ENCODE measurements at regions of chr13 and their contacts with region 1.

Region 1: DNA sequence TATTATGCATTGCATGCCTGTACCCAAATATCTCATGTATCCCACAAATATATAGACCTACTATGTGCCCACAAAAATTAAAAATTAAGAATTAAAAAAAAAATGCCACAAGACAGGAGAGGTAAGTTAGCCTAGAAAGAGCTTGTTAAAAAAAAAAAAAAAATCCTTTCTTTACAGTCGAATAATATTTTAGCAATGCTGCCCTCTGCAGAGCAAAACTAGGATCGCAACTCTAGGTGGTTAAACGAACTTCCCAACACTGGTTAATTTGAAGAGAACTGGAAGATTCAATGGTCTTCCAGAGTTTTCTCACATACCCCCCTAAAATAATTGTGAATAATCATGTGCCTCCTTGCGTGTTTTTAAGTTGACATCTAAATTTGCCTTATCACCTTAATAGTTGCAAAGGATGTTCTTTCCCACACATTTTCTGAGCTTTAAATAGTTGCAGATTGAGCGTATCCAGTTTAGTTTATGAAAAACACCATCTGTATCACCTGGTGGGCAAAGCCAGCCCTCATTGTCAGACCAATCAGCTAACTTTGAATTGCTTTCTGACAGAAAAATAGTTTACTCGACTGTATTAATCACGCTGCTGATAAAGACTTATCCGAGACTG is 47.4 kb upstream of the RCBTB2 start:
- DNase-seq: no peak
- ATAC-seq: peak; percentile 38

Region 2: DNA sequence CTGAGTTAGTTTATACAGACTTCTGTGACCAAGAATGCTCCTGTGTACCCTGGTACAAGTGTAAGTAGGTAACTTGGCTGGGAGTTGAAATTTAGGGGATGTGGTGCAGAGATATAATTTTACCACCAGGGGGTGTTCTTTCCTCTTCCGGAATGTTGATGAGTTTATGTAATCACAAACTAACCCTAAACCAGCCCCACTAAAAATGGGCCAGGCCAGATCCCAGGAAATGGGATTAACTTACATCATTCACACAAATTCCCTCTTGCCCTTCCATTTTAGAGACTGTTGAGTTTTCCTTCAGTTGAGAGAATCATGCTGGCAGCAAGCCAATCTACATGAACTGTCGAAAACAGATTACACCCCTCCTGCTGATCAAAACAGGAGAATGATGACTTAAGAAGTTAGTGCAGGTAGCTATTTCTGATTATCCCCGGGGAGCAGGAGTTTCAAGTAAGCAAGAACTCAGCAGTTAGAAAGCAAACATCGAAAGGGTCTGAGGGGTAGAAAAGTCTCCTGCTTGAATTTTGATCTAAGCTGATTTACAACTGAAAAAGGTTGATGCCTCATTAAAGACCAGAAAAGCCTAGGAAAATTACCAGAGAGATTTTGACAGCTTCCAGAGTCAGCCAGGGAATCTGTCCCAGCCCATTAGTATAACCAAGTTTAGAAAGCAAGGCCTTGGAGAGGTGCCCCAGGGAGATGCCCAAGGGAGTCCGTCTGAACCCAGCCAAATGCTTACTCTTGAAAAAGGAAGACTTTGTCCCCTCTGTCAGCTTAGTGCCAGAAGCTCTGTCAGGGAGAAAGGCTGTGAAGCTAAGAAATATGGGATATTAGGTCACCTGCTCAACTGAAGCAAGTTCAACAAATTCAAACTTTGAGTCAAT is 453.1 kb before region 1 on chr13:
- intact Hi-C with region 1: loop called (anchors 10 kb)
- DNase-seq: peak; percentile 75
- ATAC-seq: peak; percentile 91

Region 3: DNA sequence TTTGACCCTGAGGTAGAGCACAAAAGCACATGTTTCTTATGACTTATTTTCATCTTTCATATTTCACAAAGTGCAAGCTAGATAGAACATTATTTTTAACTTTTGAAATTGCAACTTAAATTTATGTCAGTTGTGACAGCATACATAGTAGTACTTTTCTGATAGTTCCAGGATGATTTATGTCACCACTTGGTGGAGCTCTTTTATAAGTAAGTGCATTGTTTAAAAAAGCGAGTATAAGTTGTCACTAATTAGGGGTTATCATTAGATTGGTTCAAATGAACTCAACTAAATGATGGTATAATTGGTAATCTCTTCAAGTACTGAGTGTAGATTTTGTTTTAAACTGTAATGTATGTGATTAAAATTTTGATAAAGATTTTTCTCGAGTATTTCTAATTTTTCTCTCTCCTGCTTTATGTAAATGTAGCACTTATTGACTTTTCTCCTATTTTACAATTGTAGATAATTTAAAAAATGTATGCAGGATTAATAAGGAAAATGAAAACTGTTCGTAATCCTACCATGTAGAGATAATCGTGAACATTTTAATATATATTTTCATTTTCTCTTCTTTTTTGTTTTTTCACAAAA is 245.7 kb before region 1 on chr13:
- intact Hi-C with region 1: loop called (anchors 1 kb)
- DNase-seq: no peak
- ATAC-seq: peak; percentile 60

Region 4: DNA sequence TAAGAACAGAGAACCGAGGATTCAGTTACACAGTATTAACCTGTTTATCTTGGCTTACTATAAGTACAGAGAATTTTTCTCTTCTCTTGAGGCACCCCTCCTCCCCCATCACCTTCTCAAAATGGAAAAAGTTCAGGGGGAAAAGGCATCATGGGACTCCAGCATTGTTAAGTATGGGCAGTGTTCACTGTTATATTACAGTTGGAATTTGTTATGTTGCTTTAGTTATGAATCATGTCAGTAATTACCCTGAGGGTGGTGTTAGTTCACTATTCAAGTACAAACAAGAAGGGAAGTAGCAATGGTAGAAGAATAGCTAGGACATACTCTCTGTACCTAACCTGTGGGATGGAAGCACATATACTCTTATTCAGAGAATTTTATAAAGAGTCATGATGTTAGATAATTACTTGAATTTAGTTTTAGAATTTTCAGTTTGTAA is 179.4 kb before region 1 on chr13:
- intact Hi-C with region 1: loop called (anchors 2 kb)
- DNase-seq: no peak
- ATAC-seq: peak; percentile 80